Adrenal gland (tissue), 19 donors: ENCODE measurements at regions of chr10 and their contacts with region 1.

Region 1: GRCh38 chr10:71719464-71720201 is at the start of gene C10orf105:
- DNase-seq: no peak
- H3K4me3 ChIP-seq: no peak within 1 kb of the TSS
- H3K27ac ChIP-seq: peak within 1 kb of the TSS in 3 of 5 donors; percentile 15 to 85 (median 17)
- H3K4me1 ChIP-seq: peaks cover 0 to 14% of the 10 kb centered on the region in 2 donors
- H3K27me3 ChIP-seq: no peaks in the 10 kb centered on the region
- CTCF ChIP-seq: no peak
- POLR2A ChIP-seq: no peak
- total RNA-seq, gene C10orf105: under 0.01 to 0.48 (median 0.08) TPM in 7 of 9 donors, not detected in the others

Region 2: DNA sequence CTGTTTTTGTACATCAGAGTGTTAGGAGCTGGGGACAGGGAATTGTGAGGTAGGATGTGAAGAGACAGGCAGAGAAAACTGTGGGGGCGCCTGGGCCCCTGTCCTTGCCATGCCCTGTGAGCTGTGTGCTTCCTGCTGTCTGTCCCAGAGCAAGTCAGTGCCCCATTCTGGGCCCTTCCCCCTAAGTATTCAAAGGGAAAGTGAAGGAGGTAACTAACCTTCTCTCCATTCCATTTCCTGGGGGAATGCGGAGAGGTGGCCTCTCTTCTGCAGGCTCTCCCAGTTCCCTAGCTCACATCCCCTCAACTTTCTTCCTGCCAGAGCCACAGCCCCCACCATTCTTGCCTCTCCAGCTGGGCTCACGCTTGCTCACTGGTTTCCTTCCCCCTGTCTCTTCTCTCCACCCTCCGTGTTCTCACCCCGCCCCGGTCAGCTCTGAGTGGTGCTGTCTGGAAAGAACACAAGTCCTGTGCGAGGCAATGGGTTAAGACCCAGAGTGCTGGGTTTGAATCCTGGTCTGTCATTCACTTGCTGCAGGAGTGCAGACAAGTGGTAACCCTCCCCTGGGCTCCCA is 63.4 kb after region 1 on chr10:
- intact Hi-C with region 1: no loop called
- DNase-seq: no peak
- H3K4me3 ChIP-seq: no peak overlapping the region
- H3K27ac ChIP-seq: no peak overlapping the region
- H3K4me1 ChIP-seq: peaks cover 0 to 8% of the 10 kb centered on the region in 2 donors
- H3K27me3 ChIP-seq: no peaks in the 10 kb centered on the region
- CTCF ChIP-seq: no peak
- POLR2A ChIP-seq: no peak

Region 3: GRCh38 chr10:71795248-71795647 is 75.6 kb after region 1 on chr10:
- intact Hi-C with region 1: loop called in 1 of 2 experiments (anchors 5 kb)
- DNase-seq: peak in 1 of 7 donors; percentile 31
- H3K4me3 ChIP-seq: no peak overlapping the region
- H3K27ac ChIP-seq: no peak overlapping the region
- H3K4me1 ChIP-seq: no peaks in the 10 kb centered on the region
- H3K27me3 ChIP-seq: no peaks in the 10 kb centered on the region
- CTCF ChIP-seq: no peak
- POLR2A ChIP-seq: no peak